Activated T-helper 1 cell treated with anti-CD3 and anti-CD28 coated beads, Interleukin-12 subunit alpha, Interleukin-12 subunit beta, Interleukin-2, Interleukin-4 antibody, amounts not matched to agents 30 ng/mL and 10 ng/mL and 1 ng/mL, durations not matched to agents 14 hours and 24 hours and 36 hours (primary cell): ENCODE measurements at regions of chr1 and their contacts with region 1.

Region 1: DNA sequence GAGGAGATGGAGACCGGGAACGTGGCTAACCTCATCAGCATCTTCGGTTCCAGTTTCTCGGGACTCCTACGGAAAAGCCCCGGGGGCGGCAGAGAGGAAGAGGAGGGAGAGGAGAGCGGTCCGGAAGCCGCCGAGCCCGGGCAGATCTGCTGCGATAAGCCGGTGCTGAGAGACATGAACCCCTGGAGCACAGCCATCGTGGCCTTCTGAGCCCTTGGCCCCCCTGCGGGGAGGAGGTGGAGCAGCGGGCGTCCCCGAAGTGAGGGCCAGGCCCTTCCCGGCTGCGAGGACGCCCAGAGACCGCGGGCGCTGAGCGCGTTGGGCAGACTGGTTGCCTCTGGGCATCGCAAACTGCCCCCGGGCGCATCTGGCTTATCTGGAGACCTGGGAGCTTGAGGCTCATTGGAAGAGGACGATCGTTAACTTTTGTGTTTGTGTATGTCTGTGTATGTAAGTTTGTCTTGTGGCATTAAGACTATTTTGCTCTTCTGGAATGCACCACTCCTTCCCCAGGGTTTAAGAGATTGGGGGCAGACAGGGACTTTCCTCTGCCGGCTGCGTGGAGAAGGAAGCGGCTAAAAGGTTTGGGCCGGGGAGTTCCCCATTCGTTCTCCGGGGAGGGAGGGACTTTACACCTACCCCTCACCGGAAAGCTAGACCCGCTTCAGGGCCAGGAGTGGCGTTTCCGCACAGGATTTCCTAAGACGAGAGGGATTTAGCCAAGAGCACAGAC is 1.3 kb downstream of the IER5 start:
- DNase-seq: peak; percentile 78
- H3K4me3 Mint-ChIP-seq: peak overlapping the region; percentile 98
- H3K27ac Mint-ChIP-seq: peak overlapping the region; percentile 95
- H3K4me1 Mint-ChIP-seq: peaks cover 57% of the 10 kb centered on the region
- H3K27me3 Mint-ChIP-seq: peaks cover 5% of the 10 kb centered on the region

Region 2: DNA sequence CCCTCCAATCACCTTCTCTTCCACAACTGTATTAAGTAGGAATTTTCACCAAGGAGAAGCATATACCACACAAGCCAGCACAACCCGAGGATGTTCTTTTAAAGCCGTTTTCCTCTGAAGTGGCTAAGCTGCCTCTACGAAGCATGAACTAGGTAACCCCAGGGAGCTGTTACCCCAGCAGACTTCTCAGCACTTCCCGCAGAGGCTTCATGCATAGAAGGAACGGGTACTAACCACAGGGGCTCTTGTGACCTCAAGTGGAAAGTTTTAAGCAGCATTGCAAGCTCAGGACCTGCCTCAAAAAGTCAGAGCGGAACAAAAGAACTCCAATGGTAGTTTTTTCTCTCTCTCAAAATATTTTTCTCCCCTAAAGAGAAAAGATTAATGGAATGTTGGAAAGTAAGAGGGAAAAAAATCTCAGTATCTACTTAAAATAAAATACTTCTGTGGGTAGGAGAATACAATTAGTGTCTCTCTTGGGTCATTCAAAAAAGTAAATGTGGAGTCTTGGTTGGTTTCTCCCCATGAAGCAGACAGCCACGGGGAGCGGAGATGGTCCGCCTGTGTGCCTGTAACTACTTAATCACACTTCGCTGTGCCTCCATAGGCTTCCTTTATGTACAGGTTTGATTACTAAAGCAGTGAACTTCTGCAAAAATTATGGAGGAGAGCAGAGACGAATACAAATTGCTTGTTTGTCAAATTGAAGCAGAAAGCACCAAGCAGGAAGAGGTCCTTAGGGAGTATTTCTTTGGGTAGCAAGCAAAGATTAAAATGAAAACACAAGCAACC is 108.1 kb before region 1 on chr1:
- intact Hi-C with region 1: loop called (anchors 2 kb)
- DNase-seq: peak; percentile 62
- H3K4me3 Mint-ChIP-seq: peak overlapping the region; percentile 61
- H3K27ac Mint-ChIP-seq: peak overlapping the region; percentile 37
- H3K4me1 Mint-ChIP-seq: peaks cover 35% of the 10 kb centered on the region
- H3K27me3 Mint-ChIP-seq: no peaks in the 10 kb centered on the region

Region 3: DNA sequence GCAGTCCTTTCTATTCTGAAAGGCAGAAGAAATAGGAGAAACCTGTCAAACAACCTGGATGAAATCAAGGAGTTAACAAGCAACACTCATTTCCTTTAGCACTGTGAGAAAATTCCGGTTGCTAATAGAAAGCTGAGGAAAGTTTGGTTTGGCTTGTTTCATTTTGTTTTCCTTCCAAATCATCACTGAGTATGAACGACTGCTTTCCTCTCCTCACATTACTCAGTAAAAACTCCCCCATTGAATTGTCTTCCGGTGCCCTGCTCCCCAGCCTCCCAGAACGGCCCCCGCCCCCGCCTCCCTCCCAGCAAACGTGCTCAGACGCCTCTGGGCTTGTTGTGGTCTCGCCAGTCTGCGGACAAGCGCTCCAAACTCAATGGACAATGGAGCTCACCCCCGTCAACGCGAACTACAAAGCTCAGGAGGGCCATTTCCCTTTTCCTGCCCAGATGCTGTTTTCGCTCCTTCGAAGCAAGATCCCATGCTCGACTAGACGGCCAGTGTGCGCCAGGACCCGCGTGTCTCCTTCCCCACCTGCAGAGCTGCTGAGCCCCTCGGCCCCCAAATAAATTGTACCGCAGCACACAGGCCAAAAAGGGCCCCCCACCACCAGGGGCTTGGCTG is 67.9 kb before region 1 on chr1:
- intact Hi-C with region 1: loop called (anchors 1 kb)
- DNase-seq: peak; percentile 37
- H3K4me3 Mint-ChIP-seq: peak overlapping the region; percentile 96
- H3K27ac Mint-ChIP-seq: peak overlapping the region; percentile 97
- H3K4me1 Mint-ChIP-seq: peaks cover 46% of the 10 kb centered on the region
- H3K27me3 Mint-ChIP-seq: peaks cover 15% of the 10 kb centered on the region

Region 4: DNA sequence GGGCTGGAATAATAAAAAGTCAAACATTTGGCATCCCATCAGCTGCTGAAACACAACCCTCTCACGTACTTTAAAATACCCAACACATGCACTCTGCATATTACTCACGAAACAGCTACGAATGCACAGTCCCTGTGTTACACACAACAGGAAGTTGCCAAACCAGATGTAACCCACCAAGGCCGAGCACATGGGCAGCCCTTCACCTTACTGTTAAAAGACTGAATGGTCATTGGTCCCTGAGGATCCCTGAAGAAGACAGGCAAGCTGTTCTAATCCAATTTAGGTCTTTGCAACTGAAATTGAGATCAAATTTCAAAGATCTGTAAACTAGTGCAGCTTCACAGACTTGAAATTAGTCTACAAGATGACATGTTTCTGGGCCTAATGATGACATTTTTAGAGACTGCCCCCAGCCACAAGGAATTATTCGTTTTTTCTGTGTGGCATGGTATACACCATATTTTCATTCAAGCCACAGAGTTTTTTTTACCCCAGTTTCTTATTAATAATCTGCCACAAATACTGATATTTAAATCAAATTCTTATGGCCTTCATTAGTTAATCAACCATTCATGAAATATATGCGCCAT is 26.9 kb before region 1 on chr1:
- intact Hi-C with region 1: loop called (anchors 2 kb)
- DNase-seq: peak; percentile 14
- H3K4me3 Mint-ChIP-seq: peak overlapping the region; percentile 34
- H3K27ac Mint-ChIP-seq: peak overlapping the region; percentile 70
- H3K4me1 Mint-ChIP-seq: peaks cover 25% of the 10 kb centered on the region
- H3K27me3 Mint-ChIP-seq: no peaks in the 10 kb centered on the region

Region 5: GRCh38 chr1:181134543-181135362 is 44.9 kb after region 1 on chr1:
- intact Hi-C with region 1: loop called (anchors 1 kb)
- DNase-seq: no peak
- H3K4me3 Mint-ChIP-seq: peak overlapping the region; percentile 57
- H3K27ac Mint-ChIP-seq: peak overlapping the region; percentile 93
- H3K4me1 Mint-ChIP-seq: peaks cover 78% of the 10 kb centered on the region
- H3K27me3 Mint-ChIP-seq: peaks cover 3% of the 10 kb centered on the region

Region 6: GRCh38 chr1:182614796-182615454 is 1525.1 kb after region 1 on chr1:
- intact Hi-C with region 1: loop called (anchors 10 kb)
- DNase-seq: peak; percentile 34
- H3K4me3 Mint-ChIP-seq: peak overlapping the region; percentile 81
- H3K27ac Mint-ChIP-seq: peak overlapping the region; percentile 88
- H3K4me1 Mint-ChIP-seq: peaks cover 89% of the 10 kb centered on the region
- H3K27me3 Mint-ChIP-seq: peaks cover 16% of the 10 kb centered on the region